ENCODE measurements at regions of chr19 and their contacts with region 1.

Region 1: GRCh38 chr19:2636897-2637683 is 65.4 kb downstream of the GNG7 start:
- DNase-seq: peak; percentile 72 to 80 (median 78)
- H3K4me3 ChIP-seq: peak overlapping the region in 4 of 7 experiments; percentile 13 to 67 (median 38)
- H3K27ac ChIP-seq: no peak overlapping the region
- H3K4me1 ChIP-seq: peaks cover 1 to 28% (median 22%) of the 10 kb centered on the region in 4 experiments
- H3K27me3 ChIP-seq: no peaks in the 10 kb centered on the region

Region 2: GRCh38 chr19:2494444-2495129 is 142.5 kb before region 1 on chr19:
- CTCF ChIA-PET with region 1: no interaction called
- POLR2A ChIA-PET with region 1: no interaction called
- DNase-seq: peak in 2 of 3 donors; percentile 73 to 77
- H3K4me3 ChIP-seq: peak overlapping the region; percentile 53 to 87 (median 75)
- H3K27ac ChIP-seq: no peak overlapping the region
- H3K4me1 ChIP-seq: peaks cover 0 to 50% (median 50%) of the 10 kb centered on the region in 4 experiments
- H3K27me3 ChIP-seq: peaks cover 0 to 15% (median 4%) of the 10 kb centered on the region in 5 experiments

Region 3: GRCh38 chr19:2610637-2611482 is 26.2 kb before region 1 on chr19:
- CTCF ChIA-PET with region 1: interaction called, 16 read pairs
- POLR2A ChIA-PET with region 1: no interaction called
- DNase-seq: peak; percentile 69 to 76 (median 71)
- H3K4me3 ChIP-seq: peak overlapping the region; percentile 11 to 87 (median 64)
- H3K27ac ChIP-seq: no peak overlapping the region
- H3K4me1 ChIP-seq: peaks cover 0 to 40% (median 31%) of the 10 kb centered on the region in 4 experiments
- H3K27me3 ChIP-seq: no peaks in the 10 kb centered on the region

Region 4: DNA sequence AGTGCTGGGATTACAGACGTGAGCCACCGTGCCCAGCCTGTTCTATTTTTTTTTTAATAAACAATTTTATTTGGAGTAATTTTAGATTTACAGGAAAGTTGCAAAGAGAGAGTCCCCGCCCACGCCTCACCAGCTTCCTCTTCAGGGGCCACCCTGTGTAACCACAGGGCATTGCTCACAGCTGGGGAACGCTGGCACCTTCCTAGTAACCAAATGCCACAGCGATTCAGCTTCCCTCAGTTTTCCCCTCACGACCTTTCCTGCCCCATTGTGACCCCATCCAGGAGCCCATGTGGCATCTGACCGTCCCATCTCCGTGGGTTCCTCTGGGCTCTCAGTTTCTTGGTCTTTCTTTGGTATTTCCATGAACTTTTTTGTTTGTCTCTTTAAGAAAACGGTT is 18.5 kb before region 1 on chr19:
- CTCF ChIA-PET with region 1: interaction called, 41 read pairs
- POLR2A ChIA-PET with region 1: interaction called, 5 read pairs
- DNase-seq: peak; percentile 82 to 97 (median 94)
- H3K4me3 ChIP-seq: peak overlapping the region in 5 of 7 experiments; percentile 22 to 65 (median 49)
- H3K27ac ChIP-seq: peak overlapping the region; percentile 87 to 95
- H3K4me1 ChIP-seq: peaks cover 8 to 84% (median 76%) of the 10 kb centered on the region in 4 experiments
- H3K27me3 ChIP-seq: no peaks in the 10 kb centered on the region